ENCODE measurements at regions of chr2 and their contacts with region 1.

Region 1: DNA sequence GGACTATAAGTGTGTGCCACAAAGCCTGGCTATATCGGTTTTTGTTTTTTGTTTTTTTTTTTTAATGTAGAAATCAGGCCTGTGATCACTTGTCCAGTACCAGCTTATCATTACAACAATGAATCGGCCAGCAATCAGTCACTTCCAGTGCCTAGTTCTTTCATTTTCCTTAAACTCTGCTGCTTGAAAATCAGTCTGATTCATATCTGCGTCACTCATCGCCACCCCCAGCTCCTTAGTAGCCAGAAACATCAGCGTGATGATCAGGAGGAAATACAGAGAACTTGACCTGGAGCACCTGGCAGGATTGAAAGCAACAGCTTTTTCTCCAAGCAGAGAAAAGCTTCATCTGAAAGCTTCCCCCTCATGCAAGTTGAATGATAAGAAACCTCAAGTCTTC is 75.4 kb downstream of the SPTBN1 start:
- DNase-seq: peak; percentile 81
- H3K4me3 Mint-ChIP-seq: no peak overlapping the region
- H3K27ac Mint-ChIP-seq: peak overlapping the region; percentile 88
- H3K4me1 Mint-ChIP-seq: peaks cover 27% of the 10 kb centered on the region
- H3K27me3 Mint-ChIP-seq: no peaks in the 10 kb centered on the region
- CTCF ChIP-seq: no peak

Region 2: GRCh38 chr2:54115284-54116137 is 416.0 kb before region 1 on chr2 and contains the start of gene ACYP2:
- CTCF ChIA-PET with region 1: no interaction called
- POLR2A ChIA-PET with region 1: interaction called, 13 read pairs
- intact Hi-C with region 1: no loop called
- DNase-seq: peak; percentile 94
- H3K4me3 Mint-ChIP-seq: peak within 1 kb of the TSS; percentile 88
- H3K27ac Mint-ChIP-seq: peak within 1 kb of the TSS; percentile 100
- H3K4me1 Mint-ChIP-seq: peaks cover 5% of the 10 kb centered on the region
- H3K27me3 Mint-ChIP-seq: no peaks in the 10 kb centered on the region
- CTCF ChIP-seq: no peak
- total RNA-seq, gene ACYP2: 14.3 and 17.8 TPM in 2 replicates

Region 3: DNA sequence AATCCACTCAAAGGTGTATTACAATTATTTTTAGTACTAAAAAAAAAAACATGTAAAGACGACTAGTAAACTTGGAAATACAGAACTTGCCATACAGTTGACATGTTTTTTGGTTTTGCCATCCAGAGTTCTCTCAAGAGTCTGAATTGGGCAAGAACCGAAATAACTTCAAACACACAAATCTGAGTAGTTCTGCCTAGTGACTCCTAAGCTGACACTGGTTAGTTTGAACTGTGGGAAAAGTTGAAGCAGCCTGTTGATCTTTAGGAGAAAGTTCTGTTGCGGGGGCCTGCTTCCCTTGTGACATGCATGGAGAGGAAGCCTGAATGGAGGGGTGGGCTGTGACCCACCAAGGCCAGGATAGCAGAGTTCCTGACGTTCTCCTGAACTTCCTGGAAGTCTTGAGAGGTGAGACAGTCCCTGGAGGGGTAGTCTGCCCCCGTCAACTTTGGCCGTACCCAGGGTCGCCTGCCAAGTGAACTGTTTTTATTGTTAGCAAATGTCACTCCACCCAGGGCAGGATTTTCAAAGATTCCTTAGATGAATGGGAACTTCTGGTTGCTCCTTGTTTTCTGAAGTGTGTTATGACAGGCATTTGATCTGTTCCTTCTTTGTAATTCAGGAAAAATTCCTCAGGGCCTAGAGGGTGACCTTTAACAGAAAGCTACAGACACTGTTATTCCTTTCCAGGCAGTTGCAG is 161.0 kb before region 1 on chr2:
- CTCF ChIA-PET with region 1: no interaction called
- POLR2A ChIA-PET with region 1: no interaction called
- intact Hi-C with region 1: no loop called
- DNase-seq: no peak
- H3K4me3 Mint-ChIP-seq: no peak overlapping the region
- H3K27ac Mint-ChIP-seq: no peak overlapping the region
- H3K4me1 Mint-ChIP-seq: no peaks in the 10 kb centered on the region
- H3K27me3 Mint-ChIP-seq: no peaks in the 10 kb centered on the region
- CTCF ChIP-seq: no peak

Region 4: GRCh38 chr2:54551123-54551756 is 19.7 kb after region 1 on chr2:
- CTCF ChIA-PET with region 1: interaction called, 3 read pairs
- POLR2A ChIA-PET with region 1: interaction called, 38 read pairs
- intact Hi-C with region 1: no loop called
- DNase-seq: no peak
- H3K4me3 Mint-ChIP-seq: no peak overlapping the region
- H3K27ac Mint-ChIP-seq: no peak overlapping the region
- H3K4me1 Mint-ChIP-seq: peaks cover 34% of the 10 kb centered on the region
- H3K27me3 Mint-ChIP-seq: no peaks in the 10 kb centered on the region
- CTCF ChIP-seq: no peak

Region 5: DNA sequence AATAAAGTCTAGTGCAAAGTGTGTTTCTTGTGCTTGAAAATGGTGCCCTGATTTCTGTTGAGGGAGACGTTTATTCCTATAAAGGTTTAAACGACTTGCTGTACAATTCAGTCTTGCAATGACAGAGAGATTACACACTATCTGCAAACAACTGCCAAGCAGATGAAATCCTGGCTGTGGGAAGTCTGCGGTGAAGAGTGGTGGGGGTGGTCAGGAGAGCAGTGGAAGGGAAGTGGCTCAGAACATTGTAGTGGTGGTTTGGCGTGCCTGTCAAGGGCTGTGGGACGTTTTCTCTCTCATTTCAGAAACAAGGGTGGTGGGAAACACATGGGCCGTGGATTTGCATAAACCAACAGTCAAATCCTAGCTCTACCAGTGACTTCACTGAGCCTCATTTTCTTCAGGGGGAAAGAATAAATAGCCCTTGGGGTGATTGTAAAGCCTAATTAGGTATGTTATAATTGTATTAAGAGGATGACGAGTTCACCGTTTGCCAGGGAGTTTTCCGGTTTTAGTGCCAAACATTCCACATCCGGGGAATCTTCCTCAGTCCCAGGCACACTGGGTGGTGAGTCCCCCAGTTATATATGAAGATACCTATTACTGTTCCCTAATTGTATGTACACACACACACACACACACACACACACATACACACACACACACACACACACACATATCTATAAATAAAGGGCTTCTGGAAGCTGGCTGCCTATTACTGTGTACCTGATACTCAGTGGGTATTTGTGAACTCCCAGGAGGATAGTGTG is 39.6 kb after region 1 on chr2:
- CTCF ChIA-PET with region 1: interaction called, 3 read pairs
- POLR2A ChIA-PET with region 1: interaction called, 14 read pairs
- intact Hi-C with region 1: no loop called
- DNase-seq: peak; percentile 87
- H3K4me3 Mint-ChIP-seq: peak overlapping the region; percentile 63
- H3K27ac Mint-ChIP-seq: peak overlapping the region; percentile 94
- H3K4me1 Mint-ChIP-seq: peaks cover 68% of the 10 kb centered on the region
- H3K27me3 Mint-ChIP-seq: no peaks in the 10 kb centered on the region
- CTCF ChIP-seq: no peak

Region 6: GRCh38 chr2:54577035-54577434 is 45.5 kb after region 1 on chr2:
- CTCF ChIA-PET with region 1: interaction called, 3 read pairs
- POLR2A ChIA-PET with region 1: interaction called, 14 read pairs
- intact Hi-C with region 1: no loop called
- DNase-seq: peak; percentile 66
- H3K4me3 Mint-ChIP-seq: peak overlapping the region; percentile 57
- H3K27ac Mint-ChIP-seq: peak overlapping the region; percentile 93
- H3K4me1 Mint-ChIP-seq: peaks cover 68% of the 10 kb centered on the region
- H3K27me3 Mint-ChIP-seq: no peaks in the 10 kb centered on the region
- CTCF ChIP-seq: no peak

Region 7: GRCh38 chr2:54597153-54597848 is 65.7 kb after region 1 on chr2:
- CTCF ChIA-PET with region 1: no interaction called
- POLR2A ChIA-PET with region 1: interaction called, 19 read pairs
- intact Hi-C with region 1: no loop called
- DNase-seq: peak; percentile 27
- H3K4me3 Mint-ChIP-seq: no peak overlapping the region
- H3K27ac Mint-ChIP-seq: peak overlapping the region; percentile 57
- H3K4me1 Mint-ChIP-seq: peaks cover 40% of the 10 kb centered on the region
- H3K27me3 Mint-ChIP-seq: no peaks in the 10 kb centered on the region
- CTCF ChIP-seq: no peak